Heart left ventricle (tissue), 16 donors: ENCODE measurements at regions of chr20 and their contacts with region 1.

Region 1: GRCh38 chr20:4026093-4026601 is 10.8 kb upstream of the RNF24 start:
- DNase-seq: peak in 1 of 5 donors; percentile 60
- ATAC-seq: peak in 3 of 4 donors; percentile 86 to 91 (median 90)
- H3K4me3 ChIP-seq: no peak overlapping the region
- H3K27ac ChIP-seq: peak overlapping the region in 2 of 12 donors; percentile 10 to 11
- H3K4me1 ChIP-seq: peaks cover 0 to 26% (median 10%) of the 10 kb centered on the region in 12 donors
- H3K27me3 ChIP-seq: no peaks in the 10 kb centered on the region
- CTCF ChIP-seq: peak in 9 of 12 donors; percentile 12 to 61 (median 41)
- POLR2A ChIP-seq: no peak

Region 2: DNA sequence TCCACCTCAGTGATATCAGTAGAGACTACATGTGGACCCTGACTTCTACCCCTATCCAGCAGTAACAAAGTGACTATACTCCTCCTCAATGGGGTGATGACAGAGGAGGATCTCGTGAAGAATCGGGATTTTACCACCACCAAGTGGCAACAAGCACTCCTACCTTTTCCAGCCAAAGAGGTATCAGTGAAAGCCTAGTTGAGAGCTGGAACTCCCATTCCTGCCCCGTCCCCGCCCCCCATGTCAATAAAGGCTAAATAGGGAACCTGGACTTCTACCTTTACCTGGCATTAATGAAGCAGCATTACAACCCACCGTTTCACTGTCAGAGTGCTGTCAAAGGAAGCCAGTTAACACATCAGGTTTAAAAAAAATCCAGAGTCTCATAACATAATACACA is 56.1 kb before region 1 on chr20:
- intact Hi-C with region 1: no loop called
- DNase-seq: no peak
- ATAC-seq: peak in 3 of 4 donors; percentile 42 to 52 (median 45)
- H3K4me3 ChIP-seq: no peak overlapping the region
- H3K27ac ChIP-seq: no peak overlapping the region
- H3K4me1 ChIP-seq: peaks cover 0 to 12% (median 0%) of the 10 kb centered on the region in 12 donors
- H3K27me3 ChIP-seq: no peaks in the 10 kb centered on the region
- CTCF ChIP-seq: peak in 3 of 12 donors; percentile 5 to 29 (median 25)
- POLR2A ChIP-seq: no peak

Region 3: GRCh38 chr20:4064144-4064909 is 38.2 kb after region 1 on chr20:
- intact Hi-C with region 1: loop called in 1 of 10 experiments (anchors 5 kb)
- DNase-seq: peak; percentile 94 to 96 (median 95)
- ATAC-seq: peak; percentile 86 to 94 (median 91)
- H3K4me3 ChIP-seq: peak overlapping the region in 1 of 12 donors; percentile 21
- H3K27ac ChIP-seq: peak overlapping the region; percentile 62 to 95 (median 80)
- H3K4me1 ChIP-seq: peaks cover 10 to 86% (median 45%) of the 10 kb centered on the region in 12 donors
- H3K27me3 ChIP-seq: no peaks in the 10 kb centered on the region
- CTCF ChIP-seq: peak in 1 of 12 donors; percentile 19
- POLR2A ChIP-seq: no peak